GM23248 (cell line): ENCODE measurements at regions of chr13 and their contacts with region 1.

Region 1: GRCh38 chr13:49669735-49670309 is 21.5 kb downstream of the EBPL start:
- DNase-seq: peak; percentile 81
- H3K4me3 ChIP-seq: no peak overlapping the region
- H3K27ac ChIP-seq: no peak overlapping the region
- H3K4me1 ChIP-seq: peaks cover 7% of the 10 kb centered on the region; the same call in 1 of the 2 replicates
- H3K27me3 ChIP-seq: no peaks in the 10 kb centered on the region

Region 2: DNA sequence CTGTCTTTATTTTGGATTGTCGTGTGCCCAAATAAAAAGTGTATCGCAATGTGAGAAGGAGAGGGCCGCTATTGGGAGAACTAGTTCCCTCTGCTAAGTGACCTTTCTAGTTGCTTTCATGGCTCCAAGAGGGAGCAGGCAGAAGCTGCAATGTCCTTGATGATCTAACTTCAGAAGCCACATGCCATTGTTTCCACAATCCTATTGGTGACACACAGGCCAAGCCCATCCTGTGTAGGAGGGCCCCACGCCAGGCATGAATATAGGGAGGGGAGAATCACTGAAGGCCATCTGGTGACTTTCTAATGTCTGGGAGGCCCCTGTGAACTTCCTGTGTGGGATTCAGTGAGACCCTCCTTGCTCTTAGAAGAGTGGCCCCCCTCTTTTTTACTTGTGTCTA is 170.4 kb after region 1 on chr13:
- in situ Hi-C with region 1: loop called (anchors 10 kb)
- DNase-seq: peak; percentile 31
- H3K4me3 ChIP-seq: no peak overlapping the region
- H3K27ac ChIP-seq: no peak overlapping the region
- H3K4me1 ChIP-seq: peaks cover 8% of the 10 kb centered on the region
- H3K27me3 ChIP-seq: no peaks in the 10 kb centered on the region